ENCODE measurements at regions of chr3 and their contacts with region 1.

Region 1: GRCh38 chr3:100047455-100048141 is 66.7 kb downstream of the FILIP1L start:
- DNase-seq: peak; percentile 77
- ATAC-seq: peak; percentile 93
- H3K4me3 ChIP-seq: peak overlapping the region; percentile 53
- H3K27ac ChIP-seq: peak overlapping the region; percentile 21; the same call in 1 of the 2 replicates
- H3K4me1 ChIP-seq: peaks cover 43% of the 10 kb centered on the region
- H3K27me3 ChIP-seq: no peaks in the 10 kb centered on the region
- CTCF ChIP-seq: no peak
- EP300 ChIP-seq: peak; percentile 41 to 73
- POLR2A ChIP-seq: no peak
- RAD21 ChIP-seq: no peak

Region 2: DNA sequence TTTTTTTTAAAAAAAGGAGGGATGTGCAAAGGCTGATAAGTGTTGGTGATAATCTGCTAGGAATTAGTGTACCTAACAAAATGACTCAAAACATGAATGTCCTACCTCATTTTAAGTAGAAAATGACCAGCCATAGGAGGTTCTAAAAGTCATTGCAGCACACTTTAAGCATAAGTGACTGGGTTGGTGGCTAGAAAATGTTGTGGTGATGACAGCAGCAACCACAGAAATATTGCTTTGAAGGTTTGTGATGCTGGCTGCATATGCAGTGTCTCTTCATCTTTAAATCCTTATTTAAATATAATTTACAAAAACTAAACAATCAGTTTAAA is 174.7 kb before region 1 on chr3:
- CTCF ChIA-PET with region 1: no interaction called
- POLR2A ChIA-PET with region 1: no interaction called
- RAD21 ChIA-PET with region 1: interaction called, 8 read pairs
- SMC1A ChIA-PET with region 1: interaction called, 4 read pairs
- in situ Hi-C with region 1: no loop called
- intact Hi-C with region 1: loop called (anchors 2 kb)
- DNase-seq: peak; percentile 50
- ATAC-seq: peak; percentile 78
- H3K4me3 ChIP-seq: 0 out of 2 replicates have a peak overlapping the region, but pooled peaks have one; percentile 38
- H3K27ac ChIP-seq: peak overlapping the region; percentile 17; the same call in 1 of the 2 replicates
- H3K4me1 ChIP-seq: peaks cover 26% of the 10 kb centered on the region
- H3K27me3 ChIP-seq: no peaks in the 10 kb centered on the region
- CTCF ChIP-seq: no peak
- EP300 ChIP-seq: peak in 1 of 2 experiments; percentile 63; a peak in 1 of 4 replicates
- POLR2A ChIP-seq: no peak
- RAD21 ChIP-seq: no peak

Region 3: DNA sequence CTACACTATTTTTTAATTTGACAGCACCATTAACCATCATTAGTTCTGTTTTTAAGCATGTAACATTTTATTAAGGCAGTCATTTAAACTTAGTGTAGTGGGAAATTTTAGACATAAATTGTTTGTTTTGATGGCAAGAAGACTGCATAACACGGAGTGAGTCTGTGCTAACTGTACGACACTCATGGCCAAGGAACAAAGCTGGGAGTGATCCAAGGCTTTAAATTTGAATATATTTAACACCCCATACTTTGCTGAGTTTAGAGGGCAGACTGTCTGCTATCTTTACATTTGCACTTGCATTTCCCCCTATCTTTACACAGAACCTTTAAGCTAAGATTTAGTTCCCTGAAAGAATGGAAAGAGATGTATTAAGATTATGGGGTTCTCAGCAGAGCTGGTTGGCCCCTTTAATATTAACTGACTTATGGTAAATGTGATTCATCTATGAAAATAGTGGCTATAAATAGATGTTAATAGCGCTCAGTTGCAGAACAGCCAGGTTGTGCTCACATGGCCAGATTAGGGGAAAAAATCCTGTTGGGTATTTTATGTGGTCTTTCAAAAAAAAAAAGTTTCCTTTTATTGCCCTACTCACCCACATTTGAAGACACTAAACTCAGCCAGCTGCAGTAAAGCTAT is 109.2 kb before region 1 on chr3:
- CTCF ChIA-PET with region 1: no interaction called
- POLR2A ChIA-PET with region 1: no interaction called
- RAD21 ChIA-PET with region 1: interaction called, 6 read pairs
- SMC1A ChIA-PET with region 1: interaction called, 11 read pairs
- in situ Hi-C with region 1: no loop called
- intact Hi-C with region 1: no loop called
- DNase-seq: no peak
- ATAC-seq: peak; percentile 56
- H3K4me3 ChIP-seq: 0 out of 2 replicates have a peak overlapping the region, but pooled peaks have one; percentile 15
- H3K27ac ChIP-seq: 0 out of 2 replicates have a peak overlapping the region, but pooled peaks have one; percentile 58
- H3K4me1 ChIP-seq: peaks cover 24% of the 10 kb centered on the region
- H3K27me3 ChIP-seq: no peaks in the 10 kb centered on the region
- CTCF ChIP-seq: no peak
- EP300 ChIP-seq: no peak
- POLR2A ChIP-seq: no peak
- RAD21 ChIP-seq: no peak

Region 4: GRCh38 chr3:100060685-100061484 is 13.3 kb after region 1 on chr3:
- CTCF ChIA-PET with region 1: interaction called, 4 read pairs
- POLR2A ChIA-PET with region 1: no interaction called
- RAD21 ChIA-PET with region 1: interaction called, 6 read pairs
- SMC1A ChIA-PET with region 1: interaction called, 13 read pairs
- in situ Hi-C with region 1: no loop called
- intact Hi-C with region 1: no loop called
- DNase-seq: no peak
- ATAC-seq: peak; percentile 32; the same call in 2 of the 3 replicates
- H3K4me3 ChIP-seq: no peak overlapping the region
- H3K27ac ChIP-seq: no peak overlapping the region
- H3K4me1 ChIP-seq: no peaks in the 10 kb centered on the region; the same call in 1 of the 2 replicates
- H3K27me3 ChIP-seq: no peaks in the 10 kb centered on the region
- CTCF ChIP-seq: no peak
- EP300 ChIP-seq: no peak
- POLR2A ChIP-seq: no peak
- RAD21 ChIP-seq: no peak

Region 5: DNA sequence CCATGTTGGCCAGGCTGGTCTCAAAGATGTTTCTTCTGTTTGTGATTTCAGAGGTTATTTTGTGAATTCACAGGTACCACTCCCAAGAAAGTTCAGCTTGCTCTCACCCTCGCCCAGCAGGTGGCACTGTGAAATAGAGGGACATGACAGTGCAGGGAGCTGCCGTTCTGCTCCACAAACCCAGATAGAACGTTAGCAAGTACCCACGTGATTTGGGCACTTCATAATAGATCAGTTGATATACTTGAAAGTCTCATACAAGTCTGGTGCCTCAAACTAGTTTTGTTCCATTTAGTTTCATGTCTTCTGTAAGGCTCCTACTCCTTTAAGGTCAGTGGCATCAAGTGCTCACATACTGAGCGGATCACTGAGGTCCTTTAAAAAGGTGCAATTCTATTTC is 21.2 kb after region 1 on chr3:
- CTCF ChIA-PET with region 1: interaction called, 43 read pairs
- POLR2A ChIA-PET with region 1: interaction called, 3 read pairs
- RAD21 ChIA-PET with region 1: interaction called, 3 read pairs
- SMC1A ChIA-PET with region 1: interaction called, 12 read pairs
- in situ Hi-C with region 1: no loop called
- intact Hi-C with region 1: no loop called
- DNase-seq: peak; percentile 33
- ATAC-seq: peak; percentile 96
- H3K4me3 ChIP-seq: no peak overlapping the region
- H3K27ac ChIP-seq: no peak overlapping the region
- H3K4me1 ChIP-seq: peaks cover 16% of the 10 kb centered on the region
- H3K27me3 ChIP-seq: no peaks in the 10 kb centered on the region
- CTCF ChIP-seq: peak; percentile 74 to 79 (median 79)
- EP300 ChIP-seq: no peak
- POLR2A ChIP-seq: no peak
- RAD21 ChIP-seq: peak; percentile 92

Measured in GM12878 (cell line).